WTC11 (cell line): ENCODE measurements at regions of chr3 and their contacts with region 1.

Region 1: DNA sequence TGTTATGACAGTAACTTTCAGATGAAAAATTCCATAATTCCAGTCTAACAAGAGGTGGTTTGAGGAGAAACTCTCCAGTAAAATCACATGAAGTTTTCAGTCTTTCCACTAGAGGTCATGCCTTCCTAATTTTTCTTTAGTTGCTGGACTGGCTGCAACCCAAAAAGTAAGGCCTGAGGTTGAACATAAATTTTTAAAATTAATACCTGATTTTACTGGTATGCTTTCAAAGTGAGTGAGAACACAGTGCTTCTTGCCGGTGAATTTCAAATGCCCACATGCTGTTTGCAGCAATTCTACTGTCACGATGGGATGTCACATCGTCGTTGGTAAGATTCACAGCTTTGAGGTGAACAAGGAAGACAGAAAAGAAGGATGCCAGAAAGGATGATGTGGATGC is 89.0 kb upstream of the FGF12 start:
- DNase-seq: no peak
- ATAC-seq: no peak
- H3K4me3 Mint-ChIP-seq: no peak overlapping the region
- H3K27ac Mint-ChIP-seq: no peak overlapping the region
- H3K4me1 Mint-ChIP-seq: peaks cover 57% of the 10 kb centered on the region
- H3K27me3 Mint-ChIP-seq: no peaks in the 10 kb centered on the region
- CTCF ChIP-seq: peak; percentile 76

Region 2: GRCh38 chr3:192687488-192688152 is 128.7 kb before region 1 on chr3:
- CTCF ChIA-PET with region 1: no interaction called
- POLR2A ChIA-PET with region 1: no interaction called
- DNase-seq: no peak
- ATAC-seq: no peak
- H3K4me3 Mint-ChIP-seq: no peak overlapping the region
- H3K27ac Mint-ChIP-seq: no peak overlapping the region; the same call in 1 of the 2 replicates
- H3K4me1 Mint-ChIP-seq: no peaks in the 10 kb centered on the region
- H3K27me3 Mint-ChIP-seq: no peaks in the 10 kb centered on the region
- CTCF ChIP-seq: no peak

Region 3: DNA sequence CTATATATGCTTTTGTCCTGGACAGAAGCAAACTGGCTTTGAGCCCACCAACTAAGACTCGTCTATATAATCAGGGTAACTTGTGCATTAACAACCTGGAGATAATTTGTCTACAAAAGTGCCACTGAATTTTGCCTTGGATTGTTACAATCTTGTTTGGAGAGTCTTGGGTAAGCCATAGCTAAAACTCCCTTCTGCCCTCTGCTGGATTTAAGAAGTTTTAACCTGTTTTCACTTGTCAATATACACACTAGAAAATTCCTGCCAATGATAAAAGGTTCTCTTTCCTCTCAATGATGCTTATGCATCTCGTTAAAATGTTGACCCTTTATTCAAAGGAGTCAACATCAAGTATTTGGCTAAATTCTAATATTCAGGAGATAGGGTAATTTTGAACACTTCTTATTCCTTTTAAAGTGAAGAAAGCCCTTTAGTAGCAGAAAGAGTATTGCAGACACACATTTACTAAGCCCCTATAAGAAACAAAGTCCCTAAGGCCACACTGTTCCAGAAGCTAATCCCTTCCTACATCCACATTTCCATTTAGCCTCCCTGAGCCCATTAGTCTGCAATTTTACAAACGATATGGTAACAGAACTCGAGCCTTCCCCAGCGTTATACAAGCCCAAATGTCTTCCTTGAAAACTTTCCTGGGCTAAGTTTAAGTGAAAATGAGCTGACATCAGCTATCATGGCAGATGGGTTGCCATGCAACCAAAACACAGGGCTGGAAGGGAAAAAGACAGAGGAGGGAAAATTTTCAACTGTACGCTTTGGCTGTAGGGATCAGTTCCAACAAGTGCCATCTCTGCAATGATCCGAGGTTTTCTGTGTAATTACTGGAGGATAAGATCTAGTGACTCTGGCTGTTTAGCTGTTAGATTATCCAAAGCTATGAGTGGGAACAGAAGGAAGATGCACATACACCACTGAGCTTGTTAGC is 13.1 kb before region 1 on chr3:
- CTCF ChIA-PET with region 1: interaction called, 18 read pairs
- POLR2A ChIA-PET with region 1: no interaction called
- DNase-seq: no peak
- ATAC-seq: peak; percentile 77
- H3K4me3 Mint-ChIP-seq: no peak overlapping the region
- H3K27ac Mint-ChIP-seq: peak overlapping the region; percentile 71
- H3K4me1 Mint-ChIP-seq: peaks cover 18% of the 10 kb centered on the region
- H3K27me3 Mint-ChIP-seq: no peaks in the 10 kb centered on the region
- CTCF ChIP-seq: no peak

Region 4: GRCh38 chr3:192917404-192918274 is 101.3 kb after region 1 on chr3 and contains the start of gene MB21D2:
- CTCF ChIA-PET with region 1: interaction called, 30 read pairs
- POLR2A ChIA-PET with region 1: interaction called, 4 read pairs
- DNase-seq: peak; percentile 58
- ATAC-seq: peak; percentile 32
- H3K4me3 Mint-ChIP-seq: peak within 1 kb of the TSS; percentile 100
- H3K27ac Mint-ChIP-seq: peak within 1 kb of the TSS; percentile 100
- H3K4me1 Mint-ChIP-seq: peaks cover 65% of the 10 kb centered on the region
- H3K27me3 Mint-ChIP-seq: peaks cover 2% of the 10 kb centered on the region; the same call in 1 of the 2 replicates
- CTCF ChIP-seq: no peak
- total RNA-seq, gene MB21D2: 14.0 to 19.7 TPM (median 15.5 TPM) in 3 replicates

Region 5: DNA sequence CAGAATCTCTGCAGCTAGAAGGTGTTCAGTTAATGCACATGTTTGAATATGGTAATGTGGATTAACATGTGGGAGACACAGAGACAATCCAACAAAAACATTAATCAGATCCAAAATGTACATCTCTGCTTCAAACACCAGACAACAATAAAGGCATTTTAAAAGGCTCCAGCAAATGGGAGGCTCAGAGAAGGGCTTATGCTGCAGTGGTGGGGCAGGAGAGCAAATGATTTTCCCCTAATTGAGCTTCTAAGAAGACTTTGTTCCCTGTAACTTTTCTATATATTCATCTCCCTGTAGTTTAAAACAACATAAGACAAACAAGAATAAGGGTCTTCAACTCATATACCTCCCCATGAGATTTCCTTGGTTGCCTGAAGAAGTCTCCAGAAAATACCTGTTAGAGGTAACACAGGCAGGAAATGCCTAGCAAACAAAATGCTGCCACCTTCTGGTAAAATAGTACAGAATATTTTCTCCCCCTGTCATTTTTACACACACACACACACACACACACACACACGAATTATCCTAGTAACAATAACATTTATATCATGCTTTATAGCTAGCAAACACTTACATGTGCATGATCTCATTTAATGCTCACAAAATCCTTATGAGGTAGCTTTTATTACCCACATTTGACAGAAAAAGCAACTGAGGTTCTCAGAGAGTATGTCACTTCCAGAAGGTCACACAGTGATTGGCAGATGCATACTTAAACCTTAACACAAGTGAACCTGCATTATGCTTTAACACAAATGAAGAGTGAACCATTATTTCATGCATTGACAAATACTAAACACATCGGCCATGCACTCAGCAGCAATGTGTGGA is 224.7 kb after region 1 on chr3:
- CTCF ChIA-PET with region 1: interaction called, 22 read pairs
- POLR2A ChIA-PET with region 1: no interaction called
- DNase-seq: no peak
- ATAC-seq: peak; percentile 67
- H3K4me3 Mint-ChIP-seq: no peak overlapping the region
- H3K27ac Mint-ChIP-seq: no peak overlapping the region
- H3K4me1 Mint-ChIP-seq: peaks cover 6% of the 10 kb centered on the region
- H3K27me3 Mint-ChIP-seq: no peaks in the 10 kb centered on the region
- CTCF ChIP-seq: no peak

Region 6: GRCh38 chr3:193129601-193130000 is 313.2 kb after region 1 on chr3:
- CTCF ChIA-PET with region 1: interaction called, 34 read pairs
- POLR2A ChIA-PET with region 1: no interaction called
- DNase-seq: no peak
- ATAC-seq: peak; percentile 39; the same call in 1 of the 2 replicates
- H3K4me3 Mint-ChIP-seq: no peak overlapping the region
- H3K27ac Mint-ChIP-seq: no peak overlapping the region
- H3K4me1 Mint-ChIP-seq: peaks cover 14% of the 10 kb centered on the region
- H3K27me3 Mint-ChIP-seq: no peaks in the 10 kb centered on the region
- CTCF ChIP-seq: no peak

Region 7: DNA sequence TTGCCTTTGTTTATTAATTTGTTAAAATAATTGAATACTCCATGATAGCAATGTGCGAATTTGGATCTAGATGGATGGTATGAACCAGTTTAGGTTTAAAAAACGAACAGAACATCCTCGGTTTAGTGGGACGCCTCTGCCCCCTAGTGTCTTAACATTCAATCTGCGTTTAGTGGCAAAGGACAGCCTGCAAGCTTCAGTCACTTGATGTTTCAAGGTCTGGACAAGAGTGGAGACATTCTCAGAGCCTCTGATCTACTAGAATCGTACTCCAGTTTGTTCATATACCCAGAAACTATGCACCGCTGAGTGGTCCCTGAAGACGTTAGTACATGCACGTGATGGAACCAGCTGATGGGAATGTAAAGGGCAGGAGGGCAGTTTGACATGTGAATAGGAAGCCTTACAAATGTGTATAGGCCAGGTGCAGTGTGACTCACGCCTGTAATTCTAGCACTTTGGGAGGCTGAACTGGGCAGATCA is 756.1 kb after region 1 on chr3:
- CTCF ChIA-PET with region 1: interaction called, 18 read pairs
- POLR2A ChIA-PET with region 1: no interaction called
- DNase-seq: peak; percentile 65
- ATAC-seq: peak; percentile 94
- H3K4me3 Mint-ChIP-seq: no peak overlapping the region
- H3K27ac Mint-ChIP-seq: no peak overlapping the region
- H3K4me1 Mint-ChIP-seq: peaks cover 27% of the 10 kb centered on the region
- H3K27me3 Mint-ChIP-seq: no peaks in the 10 kb centered on the region
- CTCF ChIP-seq: peak; percentile 47; the same call in 1 of the 2 replicates